ENCODE measurements at regions of chr3 and their contacts with region 1.

Region 1: GRCh38 chr3:70550723-70551319 is 238.4 kb upstream of the MDFIC2 start:
- DNase-seq: no peak
- H3K4me3 ChIP-seq: no peak overlapping the region
- H3K27me3 ChIP-seq: peaks cover 1% of the 10 kb centered on the region; the same call in 1 of the 2 replicates
- CTCF ChIP-seq: peak; percentile 86

Region 2: GRCh38 chr3:70507486-70507885 is 43.3 kb before region 1 on chr3:
- CTCF ChIA-PET with region 1: no interaction called
- POLR2A ChIA-PET with region 1: no interaction called
- DNase-seq: no peak
- H3K4me3 ChIP-seq: no peak overlapping the region
- H3K27me3 ChIP-seq: no peaks in the 10 kb centered on the region
- CTCF ChIP-seq: no peak

Region 3: GRCh38 chr3:70531838-70532489 is 18.9 kb before region 1 on chr3:
- CTCF ChIA-PET with region 1: interaction called, 23 read pairs
- POLR2A ChIA-PET with region 1: no interaction called
- DNase-seq: no peak
- H3K4me3 ChIP-seq: no peak overlapping the region
- H3K27me3 ChIP-seq: peaks cover 2% of the 10 kb centered on the region; the same call in 1 of the 2 replicates
- CTCF ChIP-seq: no peak

Region 4: GRCh38 chr3:70539908-70540307 is 10.9 kb before region 1 on chr3:
- CTCF ChIA-PET with region 1: interaction called, 27 read pairs
- POLR2A ChIA-PET with region 1: interaction called, 3 read pairs
- DNase-seq: no peak
- H3K4me3 ChIP-seq: no peak overlapping the region
- H3K27me3 ChIP-seq: no peaks in the 10 kb centered on the region
- CTCF ChIP-seq: no peak

Region 5: GRCh38 chr3:70608434-70608833 is 57.6 kb after region 1 on chr3:
- CTCF ChIA-PET with region 1: no interaction called
- POLR2A ChIA-PET with region 1: no interaction called
- DNase-seq: no peak
- H3K4me3 ChIP-seq: no peak overlapping the region
- H3K27me3 ChIP-seq: no peaks in the 10 kb centered on the region
- CTCF ChIP-seq: no peak

Region 6: DNA sequence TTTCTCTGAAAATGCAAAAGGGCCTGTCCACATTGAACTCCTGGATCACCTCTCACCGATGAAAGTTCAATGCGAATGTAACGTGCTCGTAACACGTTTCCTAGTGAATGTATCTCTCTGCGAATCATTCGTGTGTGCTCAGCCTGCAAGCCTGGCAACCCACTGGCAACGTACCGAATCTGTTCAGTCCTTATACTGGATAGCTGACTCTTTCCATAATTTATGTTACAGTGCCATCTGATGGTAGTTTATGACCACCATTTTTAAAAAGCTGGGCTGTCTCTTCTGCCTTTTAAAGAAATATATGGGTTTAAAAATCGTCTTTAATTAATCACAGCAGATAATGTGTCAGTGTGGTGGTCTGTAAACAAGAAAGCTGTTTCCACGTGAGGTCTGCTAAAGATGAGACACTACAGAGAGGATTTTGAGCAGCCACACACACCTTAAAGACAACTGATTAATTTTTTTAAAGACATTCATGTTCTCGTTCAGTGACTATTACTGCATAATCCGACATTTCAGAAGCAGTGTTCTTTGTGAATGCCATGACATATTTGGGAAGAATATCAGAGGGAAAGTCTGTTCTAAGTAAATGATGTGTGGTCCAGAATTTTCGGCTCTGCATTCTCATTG is 1102.1 kb after region 1 on chr3:
- CTCF ChIA-PET with region 1: interaction called, 18 read pairs
- POLR2A ChIA-PET with region 1: interaction called, 3 read pairs
- DNase-seq: no peak
- H3K4me3 ChIP-seq: no peak overlapping the region
- H3K27me3 ChIP-seq: no peaks in the 10 kb centered on the region; the same call in 1 of the 2 replicates
- CTCF ChIP-seq: peak; percentile 48

Measured in BJ (cell line).